ENCODE measurements at regions of chr1 and their contacts with region 1.

Region 1: GRCh38 chr1:244450597-244451538 is 841 bp downstream of the ADSS2 start:
- DNase-seq: peak; percentile 35

Region 2: GRCh38 chr1:244461245-244462071 is 10.6 kb after region 1 on chr1 and contains the start of gene CATSPERE:
- CTCF ChIA-PET with region 1: no interaction called
- POLR2A ChIA-PET with region 1: interaction called, 16 read pairs
- DNase-seq: peak; percentile 92

Region 3: DNA sequence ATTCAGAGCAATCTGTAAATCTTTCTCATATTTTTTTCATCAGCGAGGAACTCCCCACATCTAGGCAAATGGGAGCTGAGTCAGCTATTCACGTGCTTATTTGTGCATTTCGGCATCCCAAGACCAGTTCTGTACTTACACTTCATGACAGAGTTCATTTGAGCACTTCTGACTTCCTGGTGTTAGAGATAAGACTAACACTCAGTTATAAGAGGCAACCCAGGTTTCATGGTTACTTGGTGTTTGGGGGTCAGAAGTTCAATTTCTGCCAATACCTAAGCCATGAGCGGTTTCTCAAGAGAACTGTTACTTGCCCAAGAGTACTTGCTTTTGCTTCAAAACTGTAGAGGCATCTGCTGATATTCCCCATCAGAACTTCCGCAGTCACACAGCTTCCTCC is 177.9 kb after region 1 on chr1:
- CTCF ChIA-PET with region 1: no interaction called
- POLR2A ChIA-PET with region 1: no interaction called
- DNase-seq: no peak

Measured in HEK293T (cell line).